Thyroid gland (tissue), 4 donors: ENCODE measurements at regions of chr9 and their contacts with region 1.

Region 1: GRCh38 chr9:113657703-113658544 is 194.4 kb downstream of the RGS3 start:
- DNase-seq: peak; percentile 85 to 87
- H3K4me3 ChIP-seq: no peak overlapping the region
- H3K27ac ChIP-seq: no peak overlapping the region
- H3K4me1 ChIP-seq: peaks cover 0 to 10% of the 10 kb centered on the region in 2 donors
- H3K27me3 ChIP-seq: no peaks in the 10 kb centered on the region
- CTCF ChIP-seq: peak; percentile 83 to 98 (median 96)
- POLR2A ChIP-seq: no peak

Region 2: GRCh38 chr9:113275157-113276131 is 382.5 kb before region 1 on chr9 and contains the starts of genes CDC26 and PRPF4:
- intact Hi-C with region 1: loop called (anchors 5 kb)
- DNase-seq: peak; percentile 96 to 97
- H3K4me3 ChIP-seq: peak within 1 kb of the TSS; percentile 70 to 77 (median 73)
- H3K27ac ChIP-seq: peak within 1 kb of the TSS; percentile 77 to 87 (median 86)
- H3K4me1 ChIP-seq: peaks cover 12 to 17% of the 10 kb centered on the region in 2 donors
- H3K27me3 ChIP-seq: no peaks in the 10 kb centered on the region
- CTCF ChIP-seq: no peak
- POLR2A ChIP-seq: peak in 1 of 2 donors; percentile 84
- total RNA-seq, gene CDC26: 23.0 to 73.5 (median 38.3) TPM
- total RNA-seq, gene PRPF4: 17.7 to 25.8 (median 21.7) TPM

Region 3: DNA sequence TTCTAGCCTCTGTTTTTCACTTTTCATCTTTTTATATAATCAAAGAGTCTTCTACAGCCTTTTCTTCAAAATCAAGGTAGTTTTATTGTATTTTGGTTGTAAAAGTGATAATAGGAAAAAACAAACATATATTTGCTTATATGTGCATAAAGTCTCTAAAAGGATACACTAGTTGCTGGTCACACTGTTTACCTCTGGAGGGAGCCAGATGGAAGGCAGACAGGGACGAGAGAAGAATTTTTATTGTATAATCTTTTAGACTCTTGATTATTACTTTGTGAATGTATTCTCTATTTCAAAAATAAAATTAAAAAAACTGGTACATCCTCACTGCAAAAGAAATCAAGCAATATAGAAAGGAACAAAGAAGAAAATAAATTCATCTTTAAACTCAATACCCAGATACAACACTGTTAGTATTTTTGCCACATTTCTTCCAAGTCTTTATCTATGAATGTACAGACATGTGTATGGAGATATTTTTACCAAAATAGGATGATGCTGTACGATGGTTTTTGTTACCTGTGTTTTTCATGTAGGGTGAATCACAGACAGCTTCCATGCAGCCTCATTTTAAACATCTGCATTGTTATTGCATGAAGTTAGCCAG is 348.6 kb before region 1 on chr9:
- intact Hi-C with region 1: loop called (anchors 10 kb)
- DNase-seq: peak; percentile 33 to 37
- H3K4me3 ChIP-seq: no peak overlapping the region
- H3K27ac ChIP-seq: no peak overlapping the region
- H3K4me1 ChIP-seq: peaks cover 0 to 19% of the 10 kb centered on the region in 2 donors
- H3K27me3 ChIP-seq: no peaks in the 10 kb centered on the region
- CTCF ChIP-seq: peak in 5 of 6 experiments; percentile 13 to 81 (median 69)
- POLR2A ChIP-seq: no peak

Region 4: GRCh38 chr9:113446323-113446740 is 211.6 kb before region 1 on chr9:
- intact Hi-C with region 1: loop called (anchors 2 kb)
- DNase-seq: no peak
- H3K4me3 ChIP-seq: no peak overlapping the region
- H3K27ac ChIP-seq: no peak overlapping the region
- H3K4me1 ChIP-seq: peaks cover 0 to 5% of the 10 kb centered on the region in 2 donors
- H3K27me3 ChIP-seq: no peaks in the 10 kb centered on the region
- CTCF ChIP-seq: peak; percentile 47 to 80 (median 64)
- POLR2A ChIP-seq: no peak

Region 5: DNA sequence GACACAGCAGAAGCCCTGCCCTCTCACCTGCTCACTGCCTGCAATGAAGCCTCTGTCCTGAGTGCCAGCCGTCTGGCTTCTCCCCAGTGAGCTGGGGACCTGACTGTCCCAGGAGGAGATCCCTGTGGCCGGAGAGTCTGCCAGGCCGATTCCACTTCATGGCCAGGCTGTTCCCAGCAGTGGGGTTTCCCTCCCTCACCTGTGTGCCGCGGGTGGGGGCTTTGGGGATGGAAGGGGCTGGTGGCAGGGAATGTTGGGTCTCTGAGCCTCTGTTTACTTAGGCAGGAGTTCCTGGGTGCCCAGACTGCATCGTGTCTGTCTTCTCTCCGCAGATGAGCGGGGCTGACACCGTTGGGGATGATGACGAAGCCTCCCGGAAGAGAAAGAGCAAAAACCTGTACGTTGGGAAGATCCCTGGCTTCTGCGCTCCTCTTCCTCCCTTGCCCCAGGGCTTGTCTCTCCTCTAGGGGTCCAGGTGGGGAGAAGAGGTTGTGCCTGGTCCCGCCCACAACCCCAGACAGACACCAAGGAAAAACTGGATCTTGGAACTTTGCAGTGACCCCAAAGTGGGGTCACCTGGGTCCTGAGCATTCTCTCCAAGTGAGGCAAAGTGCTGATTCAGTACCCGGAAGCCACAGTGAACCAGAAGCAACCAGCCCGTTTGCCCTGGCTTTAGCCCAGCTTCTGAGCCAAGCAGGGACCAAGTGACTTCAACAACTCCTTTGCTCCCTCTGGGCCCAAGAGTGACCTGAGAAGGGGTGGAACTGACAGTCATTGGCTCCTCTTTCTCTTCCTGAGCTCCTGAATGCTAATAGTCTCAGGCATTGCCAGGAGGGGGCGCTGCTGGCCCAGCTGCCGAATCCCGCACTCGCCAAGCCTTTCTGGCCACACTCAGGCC is 66.7 kb before region 1 on chr9:
- intact Hi-C with region 1: loop called (anchors 1 kb)
- DNase-seq: peak; percentile 85
- H3K4me3 ChIP-seq: no peak overlapping the region
- H3K27ac ChIP-seq: peak overlapping the region; percentile 57 to 89 (median 78)
- H3K4me1 ChIP-seq: peaks cover 19 to 51% of the 10 kb centered on the region in 2 donors
- H3K27me3 ChIP-seq: no peaks in the 10 kb centered on the region
- CTCF ChIP-seq: peak; percentile 74 to 88 (median 84)
- POLR2A ChIP-seq: no peak